Activated CD8-positive, alpha-beta T cell treated with anti-CD3 and anti-CD28 coated beads for 36 hours (primary cell): ENCODE measurements at regions of chr5 and their contacts with region 1.

Region 1: DNA sequence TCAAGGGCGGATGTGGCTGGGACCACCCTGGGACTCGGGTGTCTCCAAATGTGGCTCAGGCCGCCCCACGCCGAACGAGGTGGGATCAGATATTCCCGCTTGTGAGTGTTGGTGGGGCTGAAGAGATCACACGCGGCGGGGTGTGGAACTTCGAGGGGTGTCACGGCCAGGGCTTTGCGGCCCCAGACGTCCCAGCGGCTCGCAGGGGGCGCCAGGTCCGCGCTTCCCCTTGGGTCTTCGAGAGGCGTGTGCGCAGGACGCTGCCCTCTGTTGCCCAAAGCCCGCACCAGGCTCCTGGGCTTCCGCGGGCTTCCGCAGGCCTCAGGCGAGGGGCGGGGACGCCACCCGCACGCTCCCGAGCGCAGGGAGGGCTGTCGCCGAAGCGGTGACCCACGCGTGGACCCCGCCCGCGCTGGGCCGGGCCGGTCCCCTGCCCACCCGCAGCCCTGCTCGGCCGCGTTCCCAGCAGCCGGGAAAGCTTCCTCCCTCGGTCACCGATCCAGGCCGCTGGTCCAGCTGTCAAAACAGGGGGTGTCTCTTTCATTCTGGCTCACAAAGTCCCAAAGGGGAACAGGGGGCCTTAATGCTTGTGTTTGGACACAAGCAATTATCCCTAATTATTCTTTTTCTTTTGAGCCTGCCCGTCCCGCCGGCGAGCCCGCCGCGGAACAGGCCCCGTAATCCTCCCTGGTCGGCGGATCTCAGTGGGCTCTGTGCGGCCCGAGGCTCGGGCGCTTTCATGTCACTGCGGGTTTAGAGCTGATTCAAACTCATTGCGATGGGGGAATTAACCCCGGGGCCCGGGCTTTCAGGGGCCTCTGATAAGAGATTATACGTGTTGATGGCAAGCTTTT is 60.6 kb downstream of the TMEM174 start:
- DNase-seq: peak; percentile 36
- ATAC-seq: peak; percentile 45
- H3K4me3 Mint-ChIP-seq: peak overlapping the region; percentile 27
- H3K27ac Mint-ChIP-seq: no peak overlapping the region
- H3K4me1 Mint-ChIP-seq: peaks cover 25% of the 10 kb centered on the region
- H3K27me3 Mint-ChIP-seq: peaks cover 68% of the 10 kb centered on the region
- CTCF ChIP-seq: no peak

Region 2: GRCh38 chr5:73298772-73299630 is 65.4 kb after region 1 on chr5:
- CTCF ChIA-PET with region 1: no interaction called
- POLR2A ChIA-PET with region 1: no interaction called
- intact Hi-C with region 1: loop called (anchors 5 kb)
- DNase-seq: no peak
- ATAC-seq: peak; percentile 39
- H3K4me3 Mint-ChIP-seq: no peak overlapping the region
- H3K27ac Mint-ChIP-seq: no peak overlapping the region
- H3K4me1 Mint-ChIP-seq: peaks cover 17% of the 10 kb centered on the region
- H3K27me3 Mint-ChIP-seq: peaks cover 81% of the 10 kb centered on the region
- CTCF ChIP-seq: peak; percentile 35

Region 3: DNA sequence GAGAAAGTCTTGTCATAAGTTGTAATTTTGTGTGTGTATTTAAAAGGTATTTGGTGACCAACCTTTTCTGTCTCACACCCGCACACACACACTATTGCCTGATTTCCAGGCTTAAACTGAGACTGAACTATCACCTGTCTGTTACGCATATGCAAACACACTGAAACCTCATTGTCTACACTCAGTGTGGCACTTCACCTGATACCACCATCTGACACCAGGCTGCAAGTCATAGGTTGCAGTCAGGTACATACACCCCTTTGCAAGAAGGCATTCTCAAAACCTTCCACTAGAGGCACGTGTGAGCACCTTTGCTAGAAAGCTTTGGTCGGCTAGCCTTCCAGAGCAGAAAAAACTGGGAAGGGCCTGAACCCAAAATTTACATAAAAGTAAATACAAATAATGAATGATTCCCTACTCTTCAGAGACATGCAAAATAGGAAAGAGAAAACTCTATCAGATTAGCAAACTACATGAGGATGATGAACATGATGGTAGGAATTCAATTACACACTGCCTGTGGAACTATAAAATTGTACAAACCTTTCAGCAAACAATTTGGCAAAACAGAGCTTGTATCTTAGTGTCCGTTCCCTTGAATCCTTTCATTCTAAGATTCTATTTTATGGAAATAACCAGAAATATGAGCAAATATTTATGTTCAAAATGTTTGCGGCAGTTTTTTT is 220.9 kb after region 1 on chr5:
- CTCF ChIA-PET with region 1: interaction called, 4 read pairs
- POLR2A ChIA-PET with region 1: no interaction called
- intact Hi-C with region 1: loop called (anchors 5 kb)
- DNase-seq: peak; percentile 51
- ATAC-seq: peak; percentile 86
- H3K4me3 Mint-ChIP-seq: no peak overlapping the region
- H3K27ac Mint-ChIP-seq: no peak overlapping the region
- H3K4me1 Mint-ChIP-seq: peaks cover 4% of the 10 kb centered on the region
- H3K27me3 Mint-ChIP-seq: peaks cover 61% of the 10 kb centered on the region
- CTCF ChIP-seq: peak; percentile 79